ENCODE measurements at regions of chr1 and their contacts with region 1.

Region 1: GRCh38 chr1:201361652-201362504 is 15.6 kb downstream of the TNNT2 start:
- DNase-seq: peak; percentile 93
- H3K4me3 ChIP-seq: no peak overlapping the region; a peak in 1 of 4 replicates
- H3K27ac ChIP-seq: no peak overlapping the region
- H3K4me1 ChIP-seq: peaks cover 0 to 5% of the 10 kb centered on the region in 2 experiments; a peak in 1 of 4 replicates
- H3K27me3 ChIP-seq: no peaks in the 10 kb centered on the region; the same call in 1 of the 2 replicates
- CTCF ChIP-seq: peak; percentile 90
- EP300 ChIP-seq: no peak
- RAD21 ChIP-seq: peak; percentile 91

Region 2: GRCh38 chr1:201254625-201255506 is 107.0 kb before region 1 on chr1:
- CTCF ChIA-PET with region 1: interaction called, 329 read pairs
- POLR2A ChIA-PET with region 1: no interaction called
- DNase-seq: peak; percentile 97
- H3K4me3 ChIP-seq: no peak overlapping the region
- H3K27ac ChIP-seq: no peak overlapping the region
- H3K4me1 ChIP-seq: peaks cover 0 to 11% of the 10 kb centered on the region in 2 experiments; a peak in 1 of 4 replicates
- H3K27me3 ChIP-seq: no peaks in the 10 kb centered on the region
- CTCF ChIP-seq: peak; percentile 97
- EP300 ChIP-seq: no peak
- RAD21 ChIP-seq: peak; percentile 97

Region 3: DNA sequence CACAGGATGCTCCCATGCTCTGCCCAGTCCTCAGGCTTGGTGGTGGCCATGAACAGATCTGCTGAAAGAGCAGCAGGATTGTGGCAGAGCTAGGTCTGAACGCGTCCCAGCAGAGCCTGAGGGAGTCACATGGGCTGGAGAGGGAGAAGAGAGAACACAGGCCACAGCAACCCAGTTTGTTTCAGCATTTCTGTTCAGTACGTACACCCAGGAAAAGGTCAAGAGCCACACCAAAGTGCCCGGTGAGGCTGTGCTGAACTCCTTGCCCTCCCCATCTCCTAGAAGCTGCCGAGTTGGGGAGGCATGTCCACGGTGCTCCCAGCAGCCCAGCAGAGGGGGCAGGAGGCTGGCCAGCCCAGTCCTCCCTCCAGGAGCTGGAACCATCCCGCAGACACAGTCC is 73.1 kb before region 1 on chr1:
- CTCF ChIA-PET with region 1: interaction called, 11 read pairs
- POLR2A ChIA-PET with region 1: no interaction called
- DNase-seq: no peak
- H3K4me3 ChIP-seq: no peak overlapping the region
- H3K27ac ChIP-seq: no peak overlapping the region
- H3K4me1 ChIP-seq: peaks cover 0 to 5% of the 10 kb centered on the region in 2 experiments; a peak in 2 of 4 replicates
- H3K27me3 ChIP-seq: peaks cover 5% of the 10 kb centered on the region; the same call in 1 of the 2 replicates
- CTCF ChIP-seq: no peak
- EP300 ChIP-seq: no peak
- RAD21 ChIP-seq: no peak

Region 4: DNA sequence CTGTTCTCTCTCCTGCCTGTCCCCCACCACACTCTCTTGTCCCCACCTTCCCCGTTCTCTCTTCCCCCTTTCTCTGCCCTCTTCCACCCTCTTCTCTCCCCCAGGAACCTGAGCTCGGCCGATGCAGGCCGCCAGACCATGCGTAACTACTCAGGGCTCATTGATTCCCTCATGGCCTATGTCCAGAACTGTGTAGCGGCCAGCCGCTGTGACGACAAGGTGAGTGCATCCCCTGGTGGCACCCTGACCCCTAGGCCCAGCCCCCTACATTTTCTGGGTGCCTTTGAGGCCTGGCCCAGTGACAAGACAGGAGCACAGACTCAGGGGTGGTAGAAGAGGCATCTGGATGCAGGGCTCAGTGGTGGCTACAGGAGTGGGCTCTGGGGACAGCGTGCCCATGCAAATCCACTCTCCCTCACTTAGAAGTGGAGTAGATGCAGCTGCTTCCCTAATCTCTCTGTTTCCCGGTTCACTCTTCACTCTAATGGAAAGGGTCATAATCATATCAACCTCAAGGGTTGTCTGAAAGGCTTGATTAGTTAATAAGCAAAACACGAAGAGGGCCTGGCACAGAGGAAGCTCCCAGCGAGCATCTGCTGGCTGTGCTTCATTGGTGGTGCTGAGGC is 41.6 kb before region 1 on chr1:
- CTCF ChIA-PET with region 1: interaction called, 14 read pairs
- POLR2A ChIA-PET with region 1: no interaction called
- DNase-seq: peak; percentile 77
- H3K4me3 ChIP-seq: no peak overlapping the region
- H3K27ac ChIP-seq: peak overlapping the region in 1 of 2 experiments; percentile 47; a peak in 2 of 4 replicates
- H3K4me1 ChIP-seq: peaks cover 0 to 30% of the 10 kb centered on the region in 2 experiments; a peak in 1 of 4 replicates
- H3K27me3 ChIP-seq: peaks cover 7% of the 10 kb centered on the region; the same call in 1 of the 2 replicates
- CTCF ChIP-seq: no peak
- EP300 ChIP-seq: no peak
- RAD21 ChIP-seq: 0 out of 2 replicates have a peak, but pooled peaks have one; percentile 1

Region 5: DNA sequence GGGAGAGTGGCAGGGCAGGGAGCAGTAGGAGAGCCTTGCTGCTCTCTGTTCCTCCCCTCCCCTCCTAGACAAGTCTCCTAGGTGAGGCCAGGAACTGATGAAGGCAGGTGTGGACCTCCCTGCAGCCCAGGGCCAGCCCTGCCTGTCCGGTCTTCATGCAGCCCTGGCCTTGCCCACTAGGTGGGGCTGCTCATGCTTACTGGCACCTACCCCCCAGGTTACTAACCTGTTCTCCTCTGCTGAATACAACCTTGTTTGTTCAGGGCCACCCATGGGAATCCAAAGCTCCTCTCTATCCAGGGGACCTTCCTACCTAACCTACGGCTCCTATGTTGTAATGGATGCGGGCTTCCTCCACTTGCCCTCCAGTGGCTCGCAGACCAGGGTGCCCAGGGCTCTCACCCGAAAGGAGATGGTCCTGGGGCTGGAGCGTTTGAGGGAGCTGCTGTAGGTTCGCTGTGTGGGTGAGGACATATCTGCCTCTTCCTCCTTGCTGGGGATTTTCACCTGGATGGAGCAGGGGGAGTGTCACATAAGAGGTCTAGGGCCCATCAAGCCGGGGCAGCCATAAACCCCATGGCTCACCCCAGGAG is 23.5 kb after region 1 on chr1:
- CTCF ChIA-PET with region 1: interaction called, 16 read pairs
- POLR2A ChIA-PET with region 1: no interaction called
- DNase-seq: peak; percentile 82
- H3K4me3 ChIP-seq: no peak overlapping the region; a peak in 1 of 4 replicates
- H3K27ac ChIP-seq: no peak overlapping the region
- H3K4me1 ChIP-seq: peaks cover 5 to 11% of the 10 kb centered on the region in 2 experiments; a peak in 3 of 4 replicates
- H3K27me3 ChIP-seq: no peaks in the 10 kb centered on the region
- CTCF ChIP-seq: peak; percentile 85
- EP300 ChIP-seq: no peak
- RAD21 ChIP-seq: peak; percentile 61

Region 6: DNA sequence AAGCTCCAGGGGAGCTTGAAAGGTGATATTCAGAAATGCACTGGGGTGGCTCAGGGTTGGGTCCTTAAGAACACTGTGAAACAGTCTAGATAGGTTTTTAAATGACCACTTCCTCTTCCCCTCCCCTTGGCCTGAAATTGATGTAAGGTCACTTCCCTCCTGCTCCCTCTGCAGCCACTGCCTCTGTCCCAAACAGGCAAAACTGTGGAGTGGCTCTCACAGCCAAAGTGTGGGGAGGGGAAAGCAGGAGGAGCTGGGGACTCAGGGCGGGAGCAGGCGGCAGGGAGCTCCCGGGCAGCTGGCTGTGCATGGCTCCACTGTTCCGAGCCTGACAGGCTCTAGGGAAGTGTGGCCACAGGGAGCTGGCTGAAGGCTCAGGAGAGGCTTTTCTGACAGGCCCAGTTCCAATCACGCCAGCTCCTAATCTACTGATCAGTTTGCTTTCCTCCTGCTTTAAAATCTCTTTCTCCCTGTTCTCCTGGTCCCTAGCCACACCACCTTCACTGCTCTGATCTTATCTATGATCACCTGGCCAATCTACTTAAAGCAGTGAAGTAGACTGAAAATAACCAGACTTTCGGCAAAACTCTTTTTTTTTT is 150.2 kb after region 1 on chr1:
- CTCF ChIA-PET with region 1: interaction called, 11 read pairs
- POLR2A ChIA-PET with region 1: no interaction called
- DNase-seq: peak; percentile 44
- H3K4me3 ChIP-seq: no peak overlapping the region
- H3K27ac ChIP-seq: no peak overlapping the region
- H3K4me1 ChIP-seq: peaks cover 14 to 15% of the 10 kb centered on the region in 2 experiments; a peak in 2 of 4 replicates
- H3K27me3 ChIP-seq: no peaks in the 10 kb centered on the region
- CTCF ChIP-seq: no peak
- EP300 ChIP-seq: no peak
- RAD21 ChIP-seq: no peak